ENCODE measurements at regions of chr5 and their contacts with region 1.

Region 1: DNA sequence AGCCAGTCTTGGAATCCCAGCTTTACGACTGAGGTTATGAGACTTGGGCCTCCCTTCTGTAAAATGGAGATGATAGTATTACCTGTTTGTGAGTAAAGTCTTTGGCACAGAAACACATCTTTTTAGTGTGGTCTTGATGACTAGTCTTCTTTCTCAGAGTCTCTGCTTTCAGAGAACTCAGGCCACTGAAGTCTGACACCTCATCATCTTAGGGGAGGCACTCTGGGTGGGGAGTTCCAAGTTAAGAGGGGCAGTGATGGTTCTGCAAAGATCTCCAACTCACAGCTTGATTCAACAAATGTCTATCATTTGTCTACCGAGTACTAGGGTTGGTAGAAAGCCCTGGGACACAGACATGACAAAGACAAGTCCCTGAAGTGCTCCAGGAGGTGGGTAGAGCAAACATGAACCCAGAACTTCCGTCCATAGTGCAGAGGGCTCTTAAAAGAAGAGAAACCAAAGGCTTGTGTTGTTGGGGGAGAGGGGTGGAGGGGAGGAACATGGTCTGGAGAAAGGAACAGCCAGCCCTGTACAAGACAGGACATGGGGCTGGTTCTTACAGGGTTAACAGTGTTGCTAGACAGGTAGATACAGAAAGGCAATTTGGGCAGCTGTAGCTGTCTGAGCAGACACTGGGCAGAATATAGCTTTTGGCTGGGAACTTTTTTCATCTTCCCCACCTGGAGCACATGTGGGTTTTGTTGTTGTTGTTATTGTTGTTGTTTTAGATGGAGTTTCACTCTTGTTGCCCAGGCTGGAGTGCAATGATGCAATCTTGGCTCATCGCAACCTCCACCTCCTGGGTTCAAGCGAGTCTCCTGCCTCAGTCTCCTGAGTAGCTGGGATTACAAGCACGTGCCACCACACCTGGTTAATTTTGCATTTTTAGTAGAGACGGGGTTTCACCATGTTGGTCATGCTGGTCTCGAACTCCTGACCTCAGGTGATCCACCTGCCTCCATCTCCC is 2.6 kb upstream of the CD14 start:
- DNase-seq: no peak
- H3K4me3 Mint-ChIP-seq: no peak overlapping the region
- H3K27ac Mint-ChIP-seq: no peak overlapping the region
- H3K4me1 Mint-ChIP-seq: peaks cover 57% of the 10 kb centered on the region
- H3K27me3 Mint-ChIP-seq: peaks cover 42% of the 10 kb centered on the region

Region 2: DNA sequence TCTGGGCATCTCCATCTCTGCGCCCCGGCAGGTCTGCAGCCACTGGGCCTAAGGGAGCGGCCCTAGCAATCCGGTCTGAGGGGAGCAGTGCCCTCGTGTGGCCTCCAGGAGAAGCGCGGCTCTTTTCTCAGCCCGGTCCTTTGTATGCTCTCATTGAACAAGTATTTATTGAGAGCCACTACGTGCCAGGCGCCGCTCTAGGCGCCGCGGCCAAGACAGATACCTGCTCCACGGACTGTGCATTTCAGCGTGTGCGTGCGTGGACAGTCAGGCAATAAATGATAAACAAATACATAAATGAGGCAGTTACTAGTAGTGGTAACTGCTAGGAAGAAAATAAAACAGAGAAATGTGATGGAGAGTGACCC is 277.9 kb before region 1 on chr5:
- CTCF ChIA-PET with region 1: interaction called, 10 read pairs
- DNase-seq: peak; percentile 86
- H3K4me3 Mint-ChIP-seq: peak overlapping the region; percentile 51
- H3K27ac Mint-ChIP-seq: no peak overlapping the region
- H3K4me1 Mint-ChIP-seq: peaks cover 12% of the 10 kb centered on the region
- H3K27me3 Mint-ChIP-seq: peaks cover 19% of the 10 kb centered on the region

Region 3: GRCh38 chr5:140372971-140373487 is 262.5 kb before region 1 on chr5:
- CTCF ChIA-PET with region 1: interaction called, 19 read pairs
- DNase-seq: peak; percentile 61
- H3K4me3 Mint-ChIP-seq: no peak overlapping the region
- H3K27ac Mint-ChIP-seq: no peak overlapping the region
- H3K4me1 Mint-ChIP-seq: peaks cover 3% of the 10 kb centered on the region
- H3K27me3 Mint-ChIP-seq: no peaks in the 10 kb centered on the region

Region 4: DNA sequence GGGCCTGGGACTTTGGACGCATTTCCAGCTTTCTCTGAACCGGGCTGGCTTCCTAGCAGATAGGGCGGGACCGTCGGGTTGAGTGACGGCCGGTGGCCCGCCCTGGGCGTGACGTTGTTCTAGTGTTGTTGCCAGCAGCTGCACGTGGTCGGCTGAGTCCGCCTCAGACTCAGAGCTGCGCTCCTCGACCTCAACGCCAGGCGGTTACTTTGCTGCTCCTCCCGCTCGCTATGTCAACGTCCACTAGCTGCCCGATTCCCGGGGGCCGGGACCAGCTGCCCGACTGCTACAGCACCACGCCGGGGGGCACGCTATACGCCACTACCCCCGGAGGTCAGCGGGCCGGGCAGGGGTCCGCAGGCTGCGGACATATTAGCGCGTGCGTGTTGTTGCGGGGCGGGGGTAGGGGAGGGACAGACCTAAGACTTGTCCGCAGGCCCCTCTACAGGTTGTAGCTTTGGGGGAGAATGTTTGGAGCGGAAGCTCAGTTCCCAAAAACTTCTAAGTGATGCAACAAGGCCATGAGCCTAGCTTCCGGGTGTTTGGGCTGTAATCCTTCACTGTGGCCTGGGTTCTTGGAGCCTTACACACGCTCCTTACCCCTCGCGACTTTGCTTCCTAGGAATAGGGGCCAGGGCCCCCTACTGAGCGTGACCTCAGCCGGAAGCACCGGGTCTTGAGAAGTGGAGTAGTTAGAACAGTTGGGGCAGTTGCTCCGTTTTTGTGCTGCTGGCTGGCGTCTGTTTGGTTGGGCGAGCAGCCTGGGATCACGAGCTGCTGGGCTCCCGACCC is 87.9 kb before region 1 on chr5 and contains the start of gene EIF4EBP3:
- CTCF ChIA-PET with region 1: interaction called, 22 read pairs
- DNase-seq: peak; percentile 94
- H3K4me3 Mint-ChIP-seq: peak within 1 kb of the TSS; percentile 82
- H3K27ac Mint-ChIP-seq: peak within 1 kb of the TSS; percentile 96
- H3K4me1 Mint-ChIP-seq: peaks cover 54% of the 10 kb centered on the region
- H3K27me3 Mint-ChIP-seq: no peaks in the 10 kb centered on the region

Region 5: DNA sequence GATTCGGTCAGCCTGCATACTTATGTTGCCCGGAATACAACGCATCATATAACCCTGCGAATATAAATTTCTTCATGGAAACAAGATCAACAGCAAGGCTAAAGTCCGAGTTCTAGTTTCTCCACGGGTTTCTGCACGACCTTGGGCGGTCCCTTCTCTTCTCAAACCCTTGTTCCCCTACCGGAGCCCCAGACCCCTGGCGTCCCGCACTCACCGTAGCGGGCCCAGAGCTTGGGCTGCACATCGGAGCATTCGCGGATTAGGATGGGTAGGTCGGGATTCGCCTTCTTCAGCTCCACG is 11.4 kb after region 1 on chr5:
- CTCF ChIA-PET with region 1: interaction called, 23 read pairs
- DNase-seq: no peak
- H3K4me3 Mint-ChIP-seq: peak overlapping the region; percentile 99
- H3K27ac Mint-ChIP-seq: peak overlapping the region; percentile 99
- H3K4me1 Mint-ChIP-seq: peaks cover 41% of the 10 kb centered on the region
- H3K27me3 Mint-ChIP-seq: no peaks in the 10 kb centered on the region

Measured in activated naive CD4-positive, alpha-beta T cell treated with anti-CD3 and anti-CD28 coated beads, Interleukin-2, amount 10 ng/mL, durations not matched to agents 7 days and 5 days (primary cell).